ENCODE measurements at regions of chr12 and their contacts with region 1.

Region 1: DNA sequence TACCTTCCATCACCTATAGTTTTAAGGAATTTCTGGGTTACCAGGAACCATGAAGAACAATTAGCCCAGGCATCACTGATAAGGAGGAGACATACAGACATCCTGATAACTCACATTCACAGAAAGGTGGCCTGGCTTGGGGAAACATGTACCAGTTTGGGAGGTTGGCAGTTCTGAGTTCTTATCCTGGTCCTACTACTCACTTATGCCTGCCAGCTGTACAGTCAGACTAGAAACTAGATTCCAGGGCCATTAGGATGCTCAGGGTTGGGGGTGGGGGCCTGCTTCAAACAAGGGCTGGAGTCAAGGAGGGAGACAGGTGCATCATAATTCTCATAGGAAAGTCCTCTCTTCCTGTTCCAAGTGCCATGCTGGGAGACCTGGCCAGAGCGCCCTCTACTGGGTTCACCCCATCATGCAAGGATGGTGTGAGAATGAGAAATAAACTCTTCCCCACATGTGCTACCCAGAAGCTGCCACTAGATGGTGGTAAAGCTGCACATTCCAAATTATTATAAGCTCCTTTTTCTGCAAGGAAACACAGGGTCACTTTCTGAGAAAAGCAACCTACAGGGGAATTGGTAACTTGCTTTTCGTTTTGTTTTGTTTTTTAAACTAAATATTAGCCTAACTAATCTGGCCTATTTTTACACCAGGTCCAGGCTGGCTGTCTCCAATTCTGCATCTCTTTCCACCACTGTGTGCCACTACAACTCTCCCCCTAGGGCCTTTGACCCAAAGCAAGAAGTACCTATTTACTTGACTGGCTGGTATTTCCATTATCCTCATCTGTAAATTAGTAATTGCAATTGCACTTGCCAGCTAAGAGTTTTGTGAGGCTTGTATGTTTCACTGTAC is 14.5 kb downstream of the OAS2 start:
- DNase-seq: peak; percentile 77
- H3K4me3 ChIP-seq: no peak overlapping the region
- H3K27ac ChIP-seq: no peak overlapping the region
- H3K4me1 ChIP-seq: no peaks in the 10 kb centered on the region
- H3K27me3 ChIP-seq: peaks cover 0 to under 1% of the 10 kb centered on the region in 2 experiments
- CTCF ChIP-seq: peak; percentile 92 to 99
- POLR2A ChIP-seq: no peak

Region 2: GRCh38 chr12:112906712-112907414 is 85.9 kb before region 1 on chr12 and contains the start of gene OAS1:
- CTCF ChIA-PET with region 1: interaction called, 88 read pairs
- POLR2A ChIA-PET with region 1: no interaction called
- dilution Hi-C with region 1: no loop called
- intact Hi-C with region 1: no loop called
- DNase-seq: peak; percentile 75
- H3K4me3 ChIP-seq: peak within 1 kb of the TSS in 1 of 3 experiments; percentile 36
- H3K27ac ChIP-seq: no peak within 1 kb of the TSS
- H3K4me1 ChIP-seq: peaks cover 48% of the 10 kb centered on the region
- H3K27me3 ChIP-seq: no peaks in the 10 kb centered on the region
- CTCF ChIP-seq: no peak
- POLR2A ChIP-seq: peak; percentile 43
- total RNA-seq, gene OAS1: 2.9 and 6.4 TPM in 2 replicates

Region 3: DNA sequence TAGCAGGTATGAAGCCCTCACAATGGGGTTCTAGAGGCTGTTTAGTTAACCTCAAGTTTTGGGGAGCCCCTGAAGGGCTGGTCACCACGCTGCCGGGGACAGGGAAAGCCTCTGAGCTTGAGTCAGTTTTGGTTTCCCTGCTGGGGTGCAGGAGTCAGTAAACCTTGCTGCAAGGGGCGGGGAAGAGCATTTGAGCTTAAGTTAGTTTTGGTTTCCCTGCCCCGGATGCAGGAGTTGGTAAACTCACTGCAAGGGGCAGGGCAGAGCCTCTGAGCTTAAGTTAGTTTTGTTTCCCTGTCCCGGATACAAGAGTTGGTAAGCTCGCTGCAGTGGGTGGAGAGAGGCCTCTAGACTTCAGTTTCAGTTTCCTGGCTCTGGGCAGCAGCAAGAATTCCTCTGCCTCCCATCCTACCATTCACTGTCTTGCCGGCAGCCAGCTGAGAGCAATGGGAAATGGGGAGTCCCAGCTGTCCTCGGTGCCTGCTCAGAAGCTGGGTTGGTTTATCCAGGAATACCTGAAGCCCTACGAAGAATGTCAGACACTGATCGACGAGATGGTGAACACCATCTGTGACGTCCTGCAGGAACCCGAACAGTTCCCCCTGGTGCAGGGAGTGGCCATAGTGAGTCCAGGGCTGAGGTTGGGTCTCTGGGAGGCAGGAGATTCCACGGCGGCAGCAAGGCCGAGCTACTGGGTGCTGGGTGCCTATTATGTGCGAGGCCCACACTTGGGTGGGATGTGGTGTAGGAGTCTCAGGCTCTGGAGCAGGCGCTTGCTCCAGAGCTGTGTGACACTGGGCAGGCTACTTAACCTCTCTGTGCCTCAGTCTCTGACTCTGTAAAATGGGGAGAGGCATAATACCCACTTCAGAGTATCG is 14.4 kb before region 1 on chr12 and contains the start of gene OAS2:
- CTCF ChIA-PET with region 1: interaction called, 44 read pairs
- POLR2A ChIA-PET with region 1: no interaction called
- dilution Hi-C with region 1: no loop called
- intact Hi-C with region 1: no loop called
- DNase-seq: peak; percentile 51
- H3K4me3 ChIP-seq: peak within 1 kb of the TSS in 2 of 3 experiments; percentile 26 to 66
- H3K27ac ChIP-seq: no peak within 1 kb of the TSS
- H3K4me1 ChIP-seq: peaks cover 6% of the 10 kb centered on the region
- H3K27me3 ChIP-seq: no peaks in the 10 kb centered on the region
- CTCF ChIP-seq: no peak
- POLR2A ChIP-seq: no peak
- total RNA-seq, gene OAS2: 2.4 and 3.1 TPM in 2 replicates

Region 4: DNA sequence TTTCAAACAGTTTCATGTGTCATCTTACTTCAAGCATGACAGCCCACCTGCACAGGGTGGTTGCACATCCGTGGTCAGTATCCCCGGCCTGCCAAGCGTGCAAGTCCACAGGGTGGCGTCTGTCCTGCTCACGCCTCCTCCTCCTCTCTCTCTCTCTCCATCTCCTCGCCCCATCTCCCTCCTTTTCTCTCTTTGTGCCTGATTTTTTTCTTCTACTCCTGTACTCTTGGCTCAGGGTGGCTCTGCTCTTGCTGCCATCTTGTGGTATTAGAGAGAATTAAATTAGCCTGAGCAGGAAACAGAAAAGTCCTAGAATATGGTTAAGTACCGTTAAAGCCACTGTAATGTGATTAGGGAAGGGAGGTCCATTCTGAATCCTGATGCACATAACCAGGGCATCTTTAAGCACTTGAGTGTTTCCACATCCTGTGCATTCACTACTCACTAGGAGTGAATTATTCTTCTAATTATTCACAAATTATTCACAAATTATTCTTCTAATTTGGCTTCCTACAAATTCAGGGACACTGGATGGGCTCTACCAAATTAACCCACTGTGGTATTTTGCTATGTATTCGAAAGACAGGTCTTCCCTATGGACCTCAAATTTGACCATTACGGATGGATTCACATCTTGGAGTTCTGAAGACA is 38.2 kb after region 1 on chr12:
- CTCF ChIA-PET with region 1: interaction called, 170 read pairs
- POLR2A ChIA-PET with region 1: no interaction called
- dilution Hi-C with region 1: no loop called
- intact Hi-C with region 1: loop called (anchors 1 kb)
- DNase-seq: peak; percentile 77
- H3K4me3 ChIP-seq: no peak overlapping the region
- H3K27ac ChIP-seq: no peak overlapping the region
- H3K4me1 ChIP-seq: no peaks in the 10 kb centered on the region
- H3K27me3 ChIP-seq: no peaks in the 10 kb centered on the region
- CTCF ChIP-seq: peak; percentile 58 to 65
- POLR2A ChIP-seq: no peak

Region 5: DNA sequence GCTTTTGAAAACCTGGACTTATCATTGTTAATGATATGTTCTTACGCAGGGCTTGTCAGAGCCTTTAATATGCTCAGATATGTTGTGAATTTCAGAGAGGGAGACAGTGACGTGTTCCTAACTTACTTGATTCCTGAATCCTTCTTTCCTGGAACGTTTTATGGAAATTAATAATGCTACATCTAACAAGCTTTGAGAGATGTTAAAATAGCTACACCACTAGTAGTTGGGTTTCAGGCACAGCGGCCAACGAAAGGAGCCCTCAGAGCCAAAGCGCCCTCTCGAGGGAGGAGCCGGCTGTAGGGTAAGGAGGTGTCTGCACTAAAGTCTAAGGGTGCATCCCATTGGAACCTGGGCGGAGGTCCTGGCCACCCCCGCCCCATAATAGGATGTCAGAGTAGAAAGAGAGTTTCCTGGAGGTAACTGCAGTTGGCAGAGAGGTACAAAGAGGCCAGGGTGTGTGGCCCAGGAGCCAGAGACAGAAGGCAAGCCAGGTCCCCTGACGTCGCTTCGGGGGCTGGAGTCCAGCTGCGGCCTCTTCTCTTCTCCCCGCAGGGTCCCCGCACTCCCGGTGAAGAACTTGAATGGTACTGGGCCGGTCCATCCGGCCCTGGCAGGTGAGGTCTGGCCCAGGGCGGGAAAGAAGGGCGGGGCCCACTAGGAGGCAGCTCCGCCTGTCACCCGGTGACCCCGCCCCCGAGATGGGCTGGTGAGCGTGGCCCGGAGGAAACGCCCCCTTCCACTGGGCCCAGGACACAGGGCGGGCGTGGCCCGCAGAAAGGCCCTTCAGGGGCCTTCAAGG is 100.0 kb after region 1 on chr12:
- CTCF ChIA-PET with region 1: interaction called, 99 read pairs
- POLR2A ChIA-PET with region 1: no interaction called
- dilution Hi-C with region 1: no loop called
- intact Hi-C with region 1: loop called (anchors 1 kb)
- DNase-seq: no peak
- H3K4me3 ChIP-seq: no peak overlapping the region
- H3K27ac ChIP-seq: no peak overlapping the region
- H3K4me1 ChIP-seq: no peaks in the 10 kb centered on the region
- H3K27me3 ChIP-seq: peaks cover 5 to 7% of the 10 kb centered on the region in 2 experiments
- CTCF ChIP-seq: no peak
- POLR2A ChIP-seq: no peak

Region 6: DNA sequence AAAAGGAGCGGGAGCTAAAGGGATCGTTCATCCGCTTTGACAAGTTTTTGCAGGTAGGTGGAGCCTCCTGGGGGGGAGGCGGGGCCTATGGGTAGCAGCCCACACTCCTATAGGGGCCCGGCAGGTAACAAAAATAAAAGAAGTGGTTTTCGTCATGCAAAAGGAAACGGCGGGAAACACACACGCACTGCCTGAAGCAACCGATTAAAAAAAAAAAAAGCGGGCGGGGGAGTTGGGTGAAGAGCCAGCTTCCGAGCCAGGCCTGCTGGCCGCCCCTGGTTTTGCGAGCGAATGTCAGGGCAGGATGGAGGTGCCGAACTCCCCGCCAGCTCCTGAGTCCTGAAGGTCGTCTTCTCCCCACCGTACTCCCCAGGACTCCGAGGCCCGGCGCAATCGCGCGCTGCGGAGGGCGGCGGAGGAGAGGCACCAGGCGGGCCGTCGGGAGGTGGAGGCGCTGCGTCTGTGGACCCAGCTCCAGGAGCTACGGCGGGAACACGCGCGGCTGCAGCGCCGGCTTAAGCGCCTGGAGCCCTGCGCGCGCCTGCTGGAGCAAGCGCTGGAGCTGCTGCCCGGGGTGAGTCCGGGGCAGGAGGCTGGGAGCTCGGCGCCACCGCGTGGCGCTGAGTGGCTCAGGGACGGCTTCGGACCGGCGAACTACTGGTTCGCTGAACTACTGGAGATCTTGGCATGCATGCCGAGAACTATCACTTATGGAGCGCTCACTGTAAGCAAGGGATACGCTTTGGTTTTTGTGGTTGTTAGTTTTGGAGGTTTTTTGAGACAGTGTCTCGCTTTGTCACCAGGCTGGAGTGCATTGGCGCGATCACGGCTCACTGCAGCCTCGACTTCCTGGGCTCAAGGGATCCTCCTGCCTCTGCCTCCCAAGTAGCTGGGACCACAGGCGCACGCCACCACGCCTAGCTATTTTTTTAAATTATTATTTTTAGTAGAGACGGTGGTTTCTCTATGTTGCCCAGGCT is 160.4 kb after region 1 on chr12:
- CTCF ChIA-PET with region 1: interaction called, 114 read pairs
- POLR2A ChIA-PET with region 1: no interaction called
- dilution Hi-C with region 1: no loop called
- intact Hi-C with region 1: loop called (anchors 1 kb)
- DNase-seq: peak; percentile 63
- H3K4me3 ChIP-seq: peak overlapping the region in 1 of 3 experiments; percentile 11
- H3K27ac ChIP-seq: no peak overlapping the region
- H3K4me1 ChIP-seq: no peaks in the 10 kb centered on the region
- H3K27me3 ChIP-seq: peaks cover 22 to 29% of the 10 kb centered on the region in 2 experiments
- CTCF ChIP-seq: peak; percentile 16 to 62
- POLR2A ChIP-seq: no peak

Region 7: DNA sequence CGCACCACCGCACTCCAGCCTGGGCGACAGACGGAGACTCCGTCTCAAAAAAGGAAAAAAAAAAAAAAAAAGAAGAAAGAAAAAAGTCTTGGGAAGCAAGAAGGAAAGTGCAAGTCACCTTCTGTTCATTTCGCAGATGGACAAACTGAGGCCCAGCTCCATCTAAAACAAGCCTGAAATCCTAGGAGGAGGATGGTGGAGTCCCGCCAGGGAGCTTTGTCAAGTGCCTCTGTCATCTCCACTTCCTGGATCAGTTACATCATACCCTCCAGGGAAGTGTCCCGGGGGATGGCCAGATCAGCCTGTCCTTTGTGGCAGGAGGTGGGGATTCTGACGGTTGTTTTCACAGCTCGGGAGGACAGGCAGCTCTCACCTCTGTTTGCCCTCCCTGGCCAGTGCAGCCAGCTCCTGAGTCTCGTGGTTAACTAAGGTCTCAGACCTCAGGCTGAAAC is 420.7 kb after region 1 on chr12:
- CTCF ChIA-PET with region 1: no interaction called
- POLR2A ChIA-PET with region 1: no interaction called
- dilution Hi-C with region 1: no loop called
- intact Hi-C with region 1: no loop called
- DNase-seq: no peak
- H3K4me3 ChIP-seq: no peak overlapping the region
- H3K27ac ChIP-seq: no peak overlapping the region
- H3K4me1 ChIP-seq: no peaks in the 10 kb centered on the region
- H3K27me3 ChIP-seq: no peaks in the 10 kb centered on the region
- CTCF ChIP-seq: no peak
- POLR2A ChIP-seq: no peak

Measured in endothelial cell of umbilical vein (primary cell).